Endothelial cell of umbilical vein (primary cell): ENCODE measurements at regions of chr4 and their contacts with region 1.

Region 1: GRCh38 chr4:5710961-5711478 is at the start of gene EVC:
- DNase-seq: peak; percentile 67
- H3K4me3 ChIP-seq: peak within 1 kb of the TSS; percentile 41 to 52 (median 44)
- H3K27ac ChIP-seq: peak within 1 kb of the TSS; percentile 68
- H3K4me1 ChIP-seq: peaks cover 25% of the 10 kb centered on the region
- H3K27me3 ChIP-seq: no peaks in the 10 kb centered on the region
- CTCF ChIP-seq: no peak
- POLR2A ChIP-seq: peak; percentile 80
- total RNA-seq, gene EVC: 21.3 and 31.6 TPM in 2 replicates

Region 2: DNA sequence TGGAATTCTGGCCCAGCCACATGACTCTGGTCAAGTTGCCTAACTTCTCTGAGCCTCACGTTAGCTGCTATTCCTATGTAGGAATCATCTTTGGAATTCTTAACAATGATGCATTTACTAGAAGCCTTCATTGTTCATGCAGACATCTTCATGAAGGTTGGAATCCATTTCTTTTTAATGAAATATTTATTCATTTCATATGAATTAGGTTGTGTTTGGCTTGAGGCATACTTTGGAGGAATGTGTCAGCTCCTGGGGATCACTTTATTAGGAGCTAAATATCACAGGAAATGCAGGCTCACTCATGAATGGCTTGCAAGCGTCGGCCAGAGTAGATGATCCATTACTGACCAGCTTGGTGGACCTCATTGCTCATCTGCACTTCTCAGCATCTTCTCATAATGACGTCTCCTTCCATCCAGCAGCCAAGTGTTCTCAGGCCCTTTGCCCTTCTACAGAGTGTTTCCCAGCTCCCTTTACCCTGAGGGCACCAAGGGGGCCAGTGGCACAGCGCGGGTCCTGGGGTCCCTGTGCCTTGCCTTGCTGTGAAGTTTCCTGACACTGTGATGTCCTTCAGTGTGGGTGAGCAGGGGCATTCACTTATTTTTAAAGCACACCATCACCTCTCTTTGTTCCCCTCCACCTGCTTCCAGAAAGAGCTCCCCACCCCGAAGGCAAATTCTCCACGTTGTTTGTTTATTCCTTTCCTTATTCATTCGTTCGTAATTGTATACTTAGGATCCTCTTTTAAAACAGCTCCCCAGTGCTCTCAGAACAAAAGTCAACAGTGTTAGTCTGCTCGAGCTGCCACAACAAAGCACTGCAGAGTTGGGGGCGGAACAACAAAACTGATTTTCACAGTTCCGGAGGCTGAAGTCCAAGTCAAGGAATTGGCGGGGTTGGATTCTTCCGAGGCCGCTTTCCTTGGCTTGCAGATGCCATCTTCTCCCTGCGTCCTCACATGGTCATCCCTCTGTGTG is 552.9 kb before region 1 on chr4:
- CTCF ChIA-PET with region 1: no interaction called
- POLR2A ChIA-PET with region 1: no interaction called
- dilution Hi-C with region 1: no loop called
- intact Hi-C with region 1: no loop called
- DNase-seq: no peak
- H3K4me3 ChIP-seq: no peak overlapping the region
- H3K27ac ChIP-seq: no peak overlapping the region
- H3K4me1 ChIP-seq: no peaks in the 10 kb centered on the region
- H3K27me3 ChIP-seq: no peaks in the 10 kb centered on the region
- CTCF ChIP-seq: no peak
- POLR2A ChIP-seq: no peak

Region 3: DNA sequence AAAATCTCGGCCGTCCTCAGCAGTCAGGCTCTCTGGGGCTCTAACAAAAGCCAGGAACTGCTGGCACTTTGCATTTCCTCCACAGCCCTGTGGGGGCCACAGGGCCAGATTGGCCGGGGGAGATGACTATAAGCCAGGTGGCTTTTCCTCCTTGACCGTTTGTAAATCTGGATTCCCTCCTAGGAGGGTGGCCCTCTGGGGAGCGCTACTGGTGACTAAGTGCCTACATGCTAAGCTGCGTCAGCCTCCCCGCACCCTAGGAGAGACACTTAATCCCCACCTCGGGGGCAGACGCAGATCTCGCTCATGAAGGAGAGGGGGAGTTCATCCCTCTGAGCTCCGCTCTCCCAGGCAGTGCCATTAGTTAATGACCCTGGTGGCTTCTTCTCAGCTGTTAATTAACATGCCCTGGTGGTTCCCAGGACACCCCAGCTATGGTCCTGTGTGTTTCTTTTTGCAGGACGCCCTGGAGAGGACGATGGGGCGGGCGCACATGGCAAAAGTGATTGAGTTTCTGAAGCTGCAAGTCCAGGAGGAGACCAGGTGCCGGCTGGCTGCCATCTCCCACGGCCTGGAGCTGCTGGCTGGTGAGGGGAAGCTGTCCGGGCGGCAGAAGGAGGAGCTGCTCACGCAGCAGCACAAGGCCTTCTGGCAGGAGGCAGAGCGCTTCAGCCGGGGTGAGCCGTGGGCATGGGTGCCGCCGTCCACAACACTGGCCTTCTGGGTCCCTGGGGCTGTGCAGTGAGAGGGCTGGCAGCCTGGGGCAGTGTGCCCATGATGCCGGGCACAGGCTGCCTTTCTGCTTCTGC is 41.6 kb after region 1 on chr4:
- CTCF ChIA-PET with region 1: interaction called, 9 read pairs
- POLR2A ChIA-PET with region 1: no interaction called
- dilution Hi-C with region 1: no loop called
- intact Hi-C with region 1: loop called (anchors 1 kb)
- DNase-seq: peak; percentile 59
- H3K4me3 ChIP-seq: no peak overlapping the region
- H3K27ac ChIP-seq: peak overlapping the region; percentile 86
- H3K4me1 ChIP-seq: peaks cover 55% of the 10 kb centered on the region
- H3K27me3 ChIP-seq: no peaks in the 10 kb centered on the region
- CTCF ChIP-seq: no peak
- POLR2A ChIP-seq: no peak

Region 4: DNA sequence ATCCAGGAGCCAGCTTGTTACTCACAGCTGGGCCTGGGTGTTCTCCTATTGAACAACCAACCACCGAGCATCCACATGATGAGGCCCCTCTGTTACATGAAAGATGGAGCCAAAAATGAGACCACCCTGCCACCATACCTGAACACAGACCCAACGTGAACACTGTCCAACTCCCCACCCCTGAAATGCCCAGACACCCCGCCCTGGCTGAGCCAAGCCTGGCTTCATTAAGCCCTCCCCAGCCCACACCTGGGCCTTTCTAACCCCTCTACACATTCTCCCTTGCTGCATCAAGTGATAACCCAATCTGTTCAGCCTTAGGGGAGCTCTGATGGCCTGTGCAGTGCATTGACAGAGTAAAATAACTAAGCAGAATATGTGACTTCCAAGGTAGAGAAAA is 80.6 kb after region 1 on chr4:
- CTCF ChIA-PET with region 1: interaction called, 6 read pairs
- POLR2A ChIA-PET with region 1: no interaction called
- dilution Hi-C with region 1: no loop called
- intact Hi-C with region 1: loop called (anchors 2 kb)
- DNase-seq: no peak
- H3K4me3 ChIP-seq: no peak overlapping the region
- H3K27ac ChIP-seq: no peak overlapping the region
- H3K4me1 ChIP-seq: no peaks in the 10 kb centered on the region
- H3K27me3 ChIP-seq: no peaks in the 10 kb centered on the region
- CTCF ChIP-seq: no peak
- POLR2A ChIP-seq: no peak